Dorsolateral prefrontal cortex (tissue), 120 donors: ENCODE measurements at regions of chrX and their contacts with region 1.

Region 1: GRCh38 chrX:13734278-13735172 is at the starts of genes OFD1 and TRAPPC2:
- DNase-seq: peak; percentile 76 to 93 (median 89)
- H3K4me3 ChIP-seq: peak within 1 kb of the TSS; percentile 55 to 90 (median 76)
- H3K27ac ChIP-seq: peak within 1 kb of the TSS; percentile 33 to 92 (median 85)
- H3K27me3 ChIP-seq: peaks cover 0 to 55% (median 13%) of the 10 kb centered on the region in 45 donors
- CTCF ChIP-seq: peak in 6 of 56 donors; percentile 8 to 31 (median 16)
- total RNA-seq, gene OFD1: 15.1 to 51.5 (median 29.7) TPM
- total RNA-seq, gene TRAPPC2: 17.2 to 38.9 (median 28.2) TPM

Region 2: DNA sequence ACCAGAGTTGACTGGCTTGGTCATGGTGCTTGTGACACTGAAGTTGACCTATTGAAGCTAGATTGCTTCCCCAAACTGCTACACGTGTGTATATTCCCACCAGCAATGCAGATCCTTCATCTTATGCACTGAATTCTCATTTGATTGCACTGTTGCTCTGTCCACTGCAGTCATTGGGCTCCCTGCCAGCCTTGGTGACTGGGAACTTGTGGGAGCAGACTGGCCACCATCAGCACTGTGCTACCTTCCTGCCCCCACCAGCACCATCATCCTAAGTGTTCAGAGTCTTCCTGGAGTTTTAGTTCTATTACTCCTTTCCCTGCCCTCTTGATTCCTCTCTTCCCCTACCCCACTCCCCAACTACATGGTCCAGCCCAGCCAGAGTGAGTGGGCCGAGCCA is 1061.0 kb before region 1 on chrX:
- intact Hi-C with region 1: no loop called
- DNase-seq: no peak
- H3K4me3 ChIP-seq: no peak overlapping the region
- H3K27ac ChIP-seq: no peak overlapping the region
- H3K27me3 ChIP-seq: peaks cover 0 to 29% (median 3%) of the 10 kb centered on the region in 45 donors
- CTCF ChIP-seq: no peak

Region 3: GRCh38 chrX:13669246-13669737 is 65.2 kb before region 1 on chrX:
- intact Hi-C with region 1: loop called in 1 of 2 experiments (anchors 5 kb)
- DNase-seq: no peak
- H3K4me3 ChIP-seq: no peak overlapping the region
- H3K27ac ChIP-seq: no peak overlapping the region
- H3K27me3 ChIP-seq: peaks cover 0 to 67% (median 11%) of the 10 kb centered on the region in 45 donors
- CTCF ChIP-seq: no peak

Region 4: GRCh38 chrX:13689741-13690211 is 44.7 kb before region 1 on chrX:
- intact Hi-C with region 1: loop called in 1 of 2 experiments (anchors 5 kb)
- DNase-seq: no peak
- H3K4me3 ChIP-seq: peak overlapping the region; percentile 37 to 79 (median 69)
- H3K27ac ChIP-seq: peak overlapping the region in 55 of 59 donors; percentile 26 to 96 (median 85)
- H3K27me3 ChIP-seq: peaks cover 0 to 77% (median 25%) of the 10 kb centered on the region in 45 donors
- CTCF ChIP-seq: no peak